SK-N-SH (cell line): ENCODE measurements at regions of chr7 and their contacts with region 1.

Region 1: DNA sequence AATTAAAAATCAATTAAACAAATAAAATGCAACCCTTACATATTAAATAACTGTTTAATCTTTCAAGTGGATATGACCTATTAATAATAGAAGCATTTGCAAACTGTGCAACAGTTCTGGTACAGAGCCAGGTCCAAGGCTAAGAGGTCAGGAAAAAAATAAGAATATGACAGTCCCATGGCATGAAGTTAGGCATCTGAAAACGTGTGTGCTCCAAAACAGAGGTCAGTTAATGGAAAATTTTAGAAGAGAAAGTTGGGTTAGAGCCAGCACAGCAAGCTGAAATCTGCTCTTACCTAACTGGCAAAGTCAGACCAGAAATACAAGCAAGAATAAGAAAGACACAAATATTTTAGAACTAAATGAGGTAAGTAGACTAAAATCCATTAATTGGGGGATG is 757.7 kb downstream of the GRM8 start:
- DNase-seq: no peak
- H3K4me3 ChIP-seq: no peak overlapping the region
- H3K27ac ChIP-seq: no peak overlapping the region
- H3K4me1 ChIP-seq: peaks cover 0 to 7% of the 10 kb centered on the region in 2 experiments; a peak in 2 of 4 replicates
- H3K27me3 ChIP-seq: no peaks in the 10 kb centered on the region
- CTCF ChIP-seq: no peak
- EP300 ChIP-seq: no peak
- RAD21 ChIP-seq: no peak

Region 2: DNA sequence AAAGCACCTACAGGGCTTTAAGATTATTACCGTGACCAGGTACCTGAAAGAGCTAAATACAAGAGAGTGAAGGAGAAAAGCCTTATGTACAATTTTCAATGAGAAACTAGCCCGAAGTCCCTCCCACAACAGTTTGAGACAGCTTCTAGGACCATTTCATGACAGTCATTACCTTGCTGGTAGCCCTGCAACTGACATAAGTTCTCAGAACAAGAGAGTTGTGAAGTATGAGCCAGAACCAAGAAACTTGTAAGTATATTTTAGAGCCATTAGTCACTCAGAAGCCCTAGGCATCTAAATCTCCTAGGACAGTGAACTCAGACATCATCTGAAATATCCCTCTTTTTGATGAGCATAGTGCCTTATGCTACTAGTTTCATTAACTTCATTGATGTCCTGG is 34.3 kb before region 1 on chr7:
- CTCF ChIA-PET with region 1: no interaction called
- POLR2A ChIA-PET with region 1: no interaction called
- DNase-seq: no peak
- H3K4me3 ChIP-seq: no peak overlapping the region
- H3K27ac ChIP-seq: no peak overlapping the region
- H3K4me1 ChIP-seq: peaks cover 0 to 4% of the 10 kb centered on the region in 2 experiments; a peak in 1 of 4 replicates
- H3K27me3 ChIP-seq: no peaks in the 10 kb centered on the region
- CTCF ChIP-seq: no peak
- EP300 ChIP-seq: no peak
- RAD21 ChIP-seq: no peak

Region 3: DNA sequence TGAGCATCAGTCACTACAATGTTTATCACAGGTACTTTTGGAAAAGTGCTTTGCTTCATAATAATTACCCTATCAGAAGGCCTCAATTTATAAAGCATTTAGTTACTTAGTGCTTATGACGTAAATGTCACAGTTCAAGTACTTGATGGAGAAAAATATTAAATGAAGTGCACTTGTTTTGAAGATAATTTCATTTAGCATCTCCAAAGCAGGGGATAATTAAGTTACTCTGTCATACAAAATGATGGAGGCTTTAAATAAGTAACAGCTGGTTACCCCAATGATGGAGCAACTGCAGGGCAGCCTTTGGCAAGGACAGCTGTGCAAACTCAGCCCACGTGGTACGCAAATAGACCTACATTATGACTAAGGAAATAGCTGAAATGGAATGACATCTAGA is 11.0 kb before region 1 on chr7:
- CTCF ChIA-PET with region 1: interaction called, 12 read pairs
- POLR2A ChIA-PET with region 1: no interaction called
- DNase-seq: peak; percentile 58
- H3K4me3 ChIP-seq: no peak overlapping the region
- H3K27ac ChIP-seq: peak overlapping the region in 1 of 2 experiments; percentile 80; a peak in 1 of 4 replicates
- H3K4me1 ChIP-seq: peaks cover 0 to 11% of the 10 kb centered on the region in 2 experiments; a peak in 3 of 4 replicates
- H3K27me3 ChIP-seq: no peaks in the 10 kb centered on the region
- CTCF ChIP-seq: no peak
- EP300 ChIP-seq: peak; percentile 16 to 100; a peak in 3 of 4 replicates
- RAD21 ChIP-seq: no peak